CD8-positive, alpha-beta memory T cell (primary cell): ENCODE measurements at regions of chr4 and their contacts with region 1.

Region 1: GRCh38 chr4:183261953-183262775 is 57.9 kb downstream of the CLDN22 start:
- DNase-seq: peak; percentile 33 to 65 (median 53)
- H3K4me3 ChIP-seq: no peak overlapping the region
- H3K4me3 Mint-ChIP-seq: no peak overlapping the region
- H3K27ac ChIP-seq: no peak overlapping the region
- H3K27ac Mint-ChIP-seq: peak overlapping the region in 6 of 8 donors; percentile 45 to 87 (median 76)
- H3K4me1 ChIP-seq: peaks cover 5% of the 10 kb centered on the region
- H3K4me1 Mint-ChIP-seq: peaks cover 5 to 7% (median 6%) of the 10 kb centered on the region in 3 donors
- H3K27me3 ChIP-seq: no peaks in the 10 kb centered on the region
- H3K27me3 Mint-ChIP-seq: peaks cover 5 to 35% of the 10 kb centered on the region in 2 donors

Region 2: GRCh38 chr4:183249857-183250256 is 12.3 kb before region 1 on chr4:
- CTCF ChIA-PET with region 1: interaction called, 16 read pairs
- POLR2A ChIA-PET with region 1: no interaction called
- DNase-seq: no peak
- H3K4me3 ChIP-seq: no peak overlapping the region
- H3K4me3 Mint-ChIP-seq: no peak overlapping the region
- H3K27ac ChIP-seq: no peak overlapping the region
- H3K27ac Mint-ChIP-seq: no peak overlapping the region
- H3K4me1 ChIP-seq: no peaks in the 10 kb centered on the region
- H3K4me1 Mint-ChIP-seq: no peaks in the 10 kb centered on the region
- H3K27me3 ChIP-seq: no peaks in the 10 kb centered on the region
- H3K27me3 Mint-ChIP-seq: peaks cover 4 to 9% of the 10 kb centered on the region in 2 donors

Region 3: DNA sequence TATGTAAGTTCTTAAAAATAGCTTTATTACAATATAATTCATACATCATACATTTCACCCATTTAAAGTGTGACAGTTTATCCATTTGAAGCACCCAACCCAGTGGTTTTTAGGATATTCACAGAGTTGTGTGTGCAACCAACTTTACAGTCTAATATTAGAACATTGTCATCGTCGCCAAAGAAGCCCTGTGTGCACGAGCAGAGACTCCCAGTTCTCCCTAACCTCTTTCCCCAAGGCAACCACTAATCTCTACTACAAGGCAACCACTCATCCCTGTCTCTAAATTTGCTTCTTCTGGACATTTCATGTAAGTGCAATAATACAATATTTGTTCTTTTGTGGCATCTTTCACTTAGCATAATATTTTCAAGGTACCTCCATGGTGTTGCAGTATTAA is 10.2 kb after region 1 on chr4:
- CTCF ChIA-PET with region 1: no interaction called
- POLR2A ChIA-PET with region 1: no interaction called
- DNase-seq: no peak
- H3K4me3 ChIP-seq: no peak overlapping the region
- H3K4me3 Mint-ChIP-seq: no peak overlapping the region
- H3K27ac ChIP-seq: no peak overlapping the region
- H3K27ac Mint-ChIP-seq: no peak overlapping the region
- H3K4me1 ChIP-seq: no peaks in the 10 kb centered on the region
- H3K4me1 Mint-ChIP-seq: no peaks in the 10 kb centered on the region
- H3K27me3 ChIP-seq: no peaks in the 10 kb centered on the region
- H3K27me3 Mint-ChIP-seq: peaks cover 0 to 3% of the 10 kb centered on the region in 2 donors

Region 4: GRCh38 chr4:183333983-183334382 is 71.8 kb after region 1 on chr4:
- CTCF ChIA-PET with region 1: no interaction called
- POLR2A ChIA-PET with region 1: no interaction called
- DNase-seq: no peak
- H3K4me3 ChIP-seq: no peak overlapping the region
- H3K4me3 Mint-ChIP-seq: no peak overlapping the region
- H3K27ac ChIP-seq: no peak overlapping the region
- H3K27ac Mint-ChIP-seq: no peak overlapping the region
- H3K4me1 ChIP-seq: no peaks in the 10 kb centered on the region
- H3K4me1 Mint-ChIP-seq: peaks cover 0 to 5% (median 0%) of the 10 kb centered on the region in 3 donors
- H3K27me3 ChIP-seq: no peaks in the 10 kb centered on the region
- H3K27me3 Mint-ChIP-seq: peaks cover 3 to 29% of the 10 kb centered on the region in 2 donors